ENCODE measurements at regions of chr3 and their contacts with region 1.

Region 1: DNA sequence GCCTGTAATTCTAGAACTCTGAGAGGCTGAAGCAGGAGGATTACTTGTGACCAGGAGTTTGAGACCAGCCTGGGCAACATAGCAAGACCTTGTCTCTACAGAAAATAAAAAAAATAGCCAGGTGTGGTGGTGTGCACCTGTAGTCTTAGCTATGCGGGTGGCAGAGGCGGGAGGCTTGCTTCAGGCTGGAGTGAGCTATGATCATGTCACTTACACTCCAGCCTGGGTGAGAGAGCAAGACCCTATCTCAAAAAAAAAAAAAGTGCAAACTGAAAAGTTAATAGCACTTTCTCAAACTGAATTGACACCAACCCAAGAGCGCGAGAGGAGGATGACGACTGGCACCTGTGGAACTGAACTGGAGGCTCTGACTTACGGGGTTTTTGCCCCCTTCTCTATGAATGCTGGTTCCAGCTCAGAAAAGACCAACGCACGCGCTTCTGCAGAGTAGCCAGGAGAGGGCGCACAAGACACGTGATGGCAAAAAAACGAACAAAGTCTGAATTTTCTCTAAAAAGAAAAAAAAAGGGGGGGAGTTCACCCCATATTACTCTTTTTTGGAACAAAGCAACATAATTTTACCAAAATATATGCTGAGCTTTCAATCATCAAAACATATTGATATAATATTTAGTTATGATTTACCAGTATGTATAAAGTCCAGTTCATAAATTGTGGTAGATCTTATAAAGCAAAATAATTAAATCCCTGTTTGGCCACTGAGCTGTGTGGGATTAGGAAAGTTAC is 23.7 kb downstream of the CFAP92 start:
- DNase-seq: peak; percentile 29 to 32
- ATAC-seq: peak in 6 of 8 donors; percentile 32 to 66 (median 45)
- H3K4me3 ChIP-seq: no peak overlapping the region
- H3K27ac ChIP-seq: peak overlapping the region in 3 of 10 donors; percentile 68 to 77 (median 70)
- H3K4me1 ChIP-seq: peaks cover 3 to 28% (median 19%) of the 10 kb centered on the region in 9 donors
- H3K27me3 ChIP-seq: no peaks in the 10 kb centered on the region
- CTCF ChIP-seq: peak; percentile 86 to 97 (median 93)

Region 2: DNA sequence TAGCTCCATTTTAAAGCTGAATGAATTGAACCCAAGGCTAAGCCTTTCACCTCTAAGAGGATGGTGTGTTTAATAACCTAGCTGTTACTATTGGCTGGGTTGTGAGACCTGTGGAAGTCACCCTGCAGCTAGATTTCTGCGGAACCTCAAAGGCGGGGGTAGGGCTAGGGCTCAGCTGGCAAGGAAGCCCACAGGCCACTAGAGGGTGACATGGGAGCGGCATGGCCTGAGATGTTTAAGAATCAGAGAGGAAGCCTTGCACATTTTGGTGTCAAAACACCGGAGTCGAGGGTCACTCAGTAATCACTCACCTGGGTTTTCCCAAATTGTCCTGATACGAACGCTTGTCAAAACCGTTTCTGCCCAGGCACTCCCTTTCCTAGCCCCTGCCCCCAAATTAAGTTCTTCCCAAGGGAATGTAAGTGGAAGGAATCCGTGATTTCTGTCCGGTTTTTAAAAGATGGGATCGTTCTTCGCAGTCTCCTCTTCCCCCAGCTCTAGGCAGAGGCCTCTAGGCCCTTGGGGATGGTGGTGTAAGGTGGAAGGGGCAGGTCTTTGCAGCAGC is 94.5 kb before region 1 on chr3:
- intact Hi-C with region 1: no loop called
- DNase-seq: peak; percentile 25 to 33
- ATAC-seq: no peak
- H3K4me3 ChIP-seq: no peak overlapping the region
- H3K27ac ChIP-seq: no peak overlapping the region
- H3K4me1 ChIP-seq: peaks cover 0 to 36% (median 19%) of the 10 kb centered on the region in 9 donors
- H3K27me3 ChIP-seq: no peaks in the 10 kb centered on the region
- CTCF ChIP-seq: peak; percentile 10 to 62 (median 46)

Region 3: GRCh38 chr3:129052675-129053074 is 82.5 kb after region 1 on chr3:
- intact Hi-C with region 1: loop called in 2 of 10 experiments (anchors 1 to 5 kb)
- DNase-seq: peak; percentile 70 to 83
- ATAC-seq: peak; percentile 74 to 94 (median 88)
- H3K4me3 ChIP-seq: no peak overlapping the region
- H3K27ac ChIP-seq: peak overlapping the region in 9 of 10 donors; percentile 22 to 90 (median 77)
- H3K4me1 ChIP-seq: peaks cover 9 to 27% (median 19%) of the 10 kb centered on the region in 9 donors
- H3K27me3 ChIP-seq: no peaks in the 10 kb centered on the region
- CTCF ChIP-seq: peak in 2 of 9 donors; percentile 22 to 26

Region 4: DNA sequence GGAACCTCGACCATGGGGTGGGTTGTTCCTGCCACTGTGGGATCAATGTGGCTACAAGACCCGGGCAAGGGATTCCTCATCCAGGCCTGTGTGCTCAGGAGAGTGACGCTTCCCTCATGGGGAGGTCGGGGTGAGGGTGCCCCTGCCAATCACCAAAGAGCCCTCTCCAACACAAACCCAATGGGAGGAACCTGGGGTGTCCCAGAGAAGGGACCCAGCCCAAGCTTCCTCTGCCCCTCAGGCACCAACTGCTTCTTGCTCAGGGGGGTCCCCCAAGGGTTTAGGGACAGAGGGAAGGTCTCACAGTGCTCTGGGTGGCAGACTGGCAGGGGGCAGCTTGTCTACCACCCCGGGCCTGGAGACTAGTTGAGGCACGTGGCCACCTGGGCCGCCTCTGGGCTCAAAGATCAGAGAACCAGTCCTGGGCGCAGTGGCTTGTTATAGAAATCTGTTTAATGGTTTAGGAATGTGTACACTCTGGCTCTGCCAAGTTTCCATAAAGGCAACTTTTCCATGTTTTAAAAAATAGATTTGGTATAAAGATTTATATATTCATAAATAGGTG is 117.1 kb after region 1 on chr3:
- intact Hi-C with region 1: loop called in 3 of 10 experiments (anchors 2 to 10 kb)
- DNase-seq: peak; percentile 33 to 54
- ATAC-seq: peak; percentile 43 to 84 (median 75)
- H3K4me3 ChIP-seq: no peak overlapping the region
- H3K27ac ChIP-seq: peak overlapping the region; percentile 55 to 93 (median 82)
- H3K4me1 ChIP-seq: peaks cover 4 to 13% (median 8%) of the 10 kb centered on the region in 9 donors
- H3K27me3 ChIP-seq: no peaks in the 10 kb centered on the region
- CTCF ChIP-seq: no peak

Region 5: DNA sequence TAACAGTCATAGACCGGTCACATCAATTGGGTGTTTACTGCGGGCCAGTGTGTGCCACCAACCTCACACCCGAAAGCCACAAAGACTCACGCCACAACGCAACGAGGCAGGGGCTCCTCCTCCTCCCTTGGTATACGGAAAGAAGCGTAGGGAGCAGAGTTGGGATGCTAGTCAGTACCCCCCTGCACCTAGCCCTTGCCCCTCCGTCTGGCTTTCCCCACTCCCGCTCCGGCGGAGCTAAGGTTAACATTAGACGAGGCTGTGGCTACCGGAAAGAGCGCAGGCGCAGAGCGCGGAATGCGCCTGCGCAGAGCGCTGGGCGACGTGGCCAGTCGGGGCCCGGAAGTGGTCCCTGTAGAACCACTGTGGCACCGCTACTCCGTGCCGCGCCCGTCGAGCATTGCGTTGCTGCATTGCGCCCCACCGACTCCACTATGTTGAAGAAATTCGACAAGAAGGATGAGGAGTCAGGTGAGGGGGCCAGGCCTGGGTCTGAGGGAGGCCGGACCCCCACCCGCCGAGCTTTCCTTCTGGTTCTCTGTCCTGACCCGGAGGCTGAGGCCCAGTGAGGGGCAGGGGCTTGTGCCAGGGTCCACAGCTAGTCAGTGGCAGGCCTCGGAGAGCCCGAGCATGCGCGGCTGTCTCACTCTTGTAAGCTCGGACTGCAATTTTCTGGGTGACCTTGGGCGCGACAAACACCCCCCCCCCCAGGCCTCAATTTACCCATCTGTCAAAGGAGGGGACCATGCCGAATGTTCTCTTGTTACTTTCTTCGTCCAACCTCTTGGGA is 279.3 kb after region 1 on chr3 and contains the start of gene COPG1:
- intact Hi-C with region 1: loop called in 9 of 10 experiments (anchors 2 to 10 kb)
- DNase-seq: peak; percentile 83 to 90
- ATAC-seq: peak; percentile 92 to 97 (median 96)
- H3K4me3 ChIP-seq: peak within 1 kb of the TSS; percentile 80 to 100 (median 98)
- H3K27ac ChIP-seq: peak within 1 kb of the TSS; percentile 49 to 99 (median 90)
- H3K4me1 ChIP-seq: peaks cover 8 to 58% (median 44%) of the 10 kb centered on the region in 9 donors
- H3K27me3 ChIP-seq: no peaks in the 10 kb centered on the region
- CTCF ChIP-seq: no peak
- total RNA-seq, gene COPG1: 79.5 to 113 (median 96.1) TPM